ENCODE measurements at regions of chr12 and their contacts with region 1.

Region 1: GRCh38 chr12:69570545-69571399 is 14.5 kb upstream of the CCT2 start:
- DNase-seq: peak; percentile 46
- H3K4me3 ChIP-seq: no peak overlapping the region
- H3K27ac ChIP-seq: no peak overlapping the region
- H3K4me1 ChIP-seq: no peaks in the 10 kb centered on the region
- H3K27me3 ChIP-seq: no peaks in the 10 kb centered on the region
- CTCF ChIP-seq: peak; percentile 73 to 81 (median 76)
- EP300 ChIP-seq: no peak
- POLR2A ChIP-seq: no peak

Region 2: DNA sequence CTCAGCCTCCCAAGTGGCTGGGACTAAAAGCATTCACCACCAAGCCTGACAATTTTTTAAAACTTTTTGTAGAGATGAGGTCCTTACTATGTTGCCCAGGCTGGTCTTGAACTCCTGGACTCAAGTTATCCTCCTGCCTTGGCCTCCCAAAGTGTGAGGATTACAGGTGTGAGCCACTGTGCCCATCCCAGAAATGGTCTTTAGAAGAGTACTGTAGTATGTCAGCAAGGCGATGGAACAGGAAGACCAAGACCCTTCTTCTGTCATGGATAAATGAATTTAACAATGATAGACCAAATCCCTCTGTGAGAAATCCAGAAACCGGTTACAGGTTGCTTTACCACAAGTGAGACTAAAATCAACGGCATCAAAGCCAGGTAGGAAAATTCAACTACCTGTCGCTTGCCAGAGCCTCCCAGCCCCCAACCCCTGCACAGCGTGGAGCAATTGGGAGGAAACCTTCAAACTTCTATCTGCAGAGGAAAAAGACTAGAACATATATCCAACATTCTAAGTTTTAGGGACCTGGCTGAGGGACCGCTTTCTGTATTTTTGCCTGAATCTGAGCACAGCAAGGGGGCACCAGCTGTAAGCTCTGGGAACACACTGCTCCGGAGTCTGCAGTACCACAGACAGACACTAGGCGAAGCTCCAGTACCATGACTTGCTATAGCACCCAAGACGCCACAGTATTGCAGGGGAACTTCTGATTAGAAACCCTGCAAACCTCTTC is 280.1 kb before region 1 on chr12:
- in situ Hi-C with region 1: loop called in 2 of 4 experiments (anchors 10 to 25 kb)
- intact Hi-C with region 1: no loop called
- DNase-seq: peak; percentile 85
- H3K4me3 ChIP-seq: no peak overlapping the region
- H3K27ac ChIP-seq: no peak overlapping the region
- H3K4me1 ChIP-seq: peaks cover 0 to 6% (median 3%) of the 10 kb centered on the region in 4 donors
- H3K27me3 ChIP-seq: peaks cover 47% of the 10 kb centered on the region
- CTCF ChIP-seq: peak; percentile 77 to 90 (median 86)
- EP300 ChIP-seq: no peak
- POLR2A ChIP-seq: no peak

Region 3: DNA sequence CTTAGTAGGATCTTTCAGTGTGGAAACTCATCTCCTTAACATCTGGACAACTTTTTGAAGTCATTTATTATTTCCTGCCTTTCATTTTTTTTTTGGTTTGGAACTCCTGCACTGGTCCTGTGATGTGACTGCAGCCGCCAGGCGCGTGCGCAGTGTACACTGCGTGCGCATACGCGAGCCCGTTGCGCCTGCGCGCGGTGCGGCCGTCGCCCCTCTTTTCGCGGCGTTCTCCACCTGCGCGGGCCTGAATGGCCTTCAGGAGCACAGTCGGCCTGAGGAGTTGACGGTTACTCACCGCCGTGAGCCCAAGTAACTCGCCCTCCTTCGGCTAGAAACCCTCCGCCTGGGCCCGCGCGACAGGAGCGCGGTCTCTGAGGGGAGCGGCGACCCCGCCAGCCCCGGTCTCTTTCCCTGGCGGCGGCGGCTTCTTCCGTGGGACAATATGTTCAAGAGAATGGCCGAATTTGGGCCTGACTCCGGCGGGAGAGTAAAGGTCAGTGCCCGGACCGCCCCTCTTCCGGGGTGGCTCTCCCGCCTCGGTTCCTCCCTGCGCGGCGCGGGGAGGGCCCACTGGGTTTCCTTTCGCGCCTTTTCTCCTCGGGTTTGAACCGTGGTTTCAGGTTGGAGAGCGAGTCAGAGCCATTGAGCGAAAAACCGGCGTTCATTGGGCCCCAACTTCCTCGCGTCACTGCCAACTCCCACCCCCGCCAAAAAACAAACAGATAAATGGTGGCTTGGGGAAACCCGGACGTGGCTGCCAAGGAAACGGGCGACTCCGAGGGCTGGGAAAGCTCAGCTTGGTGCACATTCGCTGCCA is 211.0 kb before region 1 on chr12 and contains the start of gene YEATS4:
- in situ Hi-C with region 1: loop called in 1 of 4 experiments (anchors 25 kb)
- intact Hi-C with region 1: no loop called
- DNase-seq: peak; percentile 88
- H3K4me3 ChIP-seq: peak within 1 kb of the TSS; percentile 73 to 93 (median 87)
- H3K27ac ChIP-seq: peak within 1 kb of the TSS; percentile 97 to 99 (median 98)
- H3K4me1 ChIP-seq: peaks cover 4 to 25% (median 14%) of the 10 kb centered on the region in 4 donors
- H3K27me3 ChIP-seq: no peaks in the 10 kb centered on the region
- CTCF ChIP-seq: peak in 2 of 5 experiments; percentile 6 to 20
- EP300 ChIP-seq: no peak
- POLR2A ChIP-seq: peak; percentile 78
- total RNA-seq, gene YEATS4: 4.4 to 32.2 (median 7.9) TPM

Region 4: DNA sequence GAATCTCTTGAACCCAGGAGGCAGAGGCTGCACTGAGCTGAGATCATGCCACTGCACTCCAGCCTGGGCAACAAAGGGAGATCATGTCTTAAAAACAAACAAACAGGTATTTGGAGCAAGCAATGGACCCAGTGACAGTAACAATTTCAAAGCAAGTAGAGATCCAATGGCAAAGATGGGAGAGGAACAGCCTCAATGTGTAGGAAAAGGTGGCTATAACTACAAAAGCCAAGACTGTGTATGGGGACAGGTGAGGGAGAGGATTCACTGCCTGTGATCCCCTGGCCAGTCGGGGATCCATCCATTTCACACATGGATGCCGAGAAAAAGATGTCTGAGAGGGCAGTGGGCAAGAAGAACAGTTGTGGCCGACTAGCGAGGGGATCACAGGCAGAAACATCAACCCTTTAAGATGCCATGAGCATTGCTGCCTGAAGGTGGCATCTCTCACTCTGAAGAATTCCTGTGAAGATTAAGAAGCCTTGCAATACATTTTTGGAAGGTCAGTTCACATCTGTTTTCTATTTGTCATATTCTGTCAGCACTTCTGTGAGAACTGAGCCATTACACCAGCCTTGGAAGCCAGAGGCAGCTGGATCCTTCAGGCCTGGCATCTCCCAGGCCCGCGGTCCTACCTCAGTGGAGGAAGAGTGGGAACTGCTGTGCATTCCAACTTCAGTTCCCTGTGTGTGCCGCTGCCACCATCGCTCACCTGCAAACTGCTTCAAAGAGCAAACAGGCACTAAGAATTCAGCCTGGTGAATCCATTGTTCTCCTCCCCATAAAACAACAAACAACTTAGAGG is 155.1 kb before region 1 on chr12:
- in situ Hi-C with region 1: loop called in 1 of 4 experiments (anchors 10 kb)
- intact Hi-C with region 1: no loop called
- DNase-seq: peak; percentile 42
- H3K4me3 ChIP-seq: no peak overlapping the region
- H3K27ac ChIP-seq: no peak overlapping the region
- H3K4me1 ChIP-seq: peaks cover 0 to 7% (median 2%) of the 10 kb centered on the region in 4 donors
- H3K27me3 ChIP-seq: no peaks in the 10 kb centered on the region
- CTCF ChIP-seq: peak; percentile 61 to 79 (median 69)
- EP300 ChIP-seq: no peak
- POLR2A ChIP-seq: no peak